HEK293 (cell line): ENCODE measurements at regions of chr17 and their contacts with region 1.

Region 1: DNA sequence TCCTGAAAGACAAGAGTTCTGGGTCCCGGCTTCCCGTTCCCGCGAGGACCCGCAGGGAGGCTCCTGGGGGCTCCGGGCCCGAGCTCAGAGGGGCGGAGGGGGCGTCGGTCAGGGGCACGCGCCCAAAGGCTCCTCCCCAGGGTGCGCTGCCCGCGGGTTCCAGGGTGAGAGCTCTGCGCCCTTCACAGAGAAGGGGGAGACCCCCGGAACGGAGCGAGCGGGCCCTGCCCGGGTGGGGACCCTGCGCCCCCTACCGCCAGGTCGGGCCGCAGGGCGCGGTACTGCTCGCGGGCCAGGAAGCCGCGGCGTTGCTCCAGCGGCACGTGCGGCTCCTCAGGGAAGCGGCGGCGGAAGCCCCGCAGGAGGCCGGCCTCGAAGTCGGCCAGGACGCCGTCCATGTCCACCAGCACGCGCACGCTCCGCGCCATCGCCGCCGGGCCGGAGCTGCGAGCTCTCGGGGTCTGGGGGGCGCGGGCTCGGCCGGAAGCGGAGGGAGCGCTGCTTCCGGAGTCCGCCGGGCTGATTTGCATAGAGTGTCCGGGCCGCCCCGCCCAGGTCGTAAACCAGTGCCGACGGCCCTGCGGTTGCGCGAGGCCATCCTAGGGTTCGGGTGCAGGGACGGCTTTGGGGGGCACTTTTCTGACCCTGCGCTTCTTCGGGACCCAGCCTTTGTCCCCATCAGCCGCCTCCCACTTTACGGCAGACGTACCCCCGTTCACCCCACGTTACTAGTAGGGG is at the start of gene NT5C:
- H3K4me3 ChIP-seq: peak within 1 kb of the TSS; percentile 61
- H3K27ac ChIP-seq: peak within 1 kb of the TSS; percentile 94
- H3K4me1 ChIP-seq: peaks cover 3% of the 10 kb centered on the region; the same call in 1 of the 2 replicates
- CTCF ChIP-seq: peak; percentile 87

Region 2: GRCh38 chr17:74881073-74881472 is 250.4 kb before region 1 on chr17:
- CTCF ChIA-PET with region 1: no interaction called
- POLR2A ChIA-PET with region 1: no interaction called
- H3K4me3 ChIP-seq: no peak overlapping the region
- H3K27ac ChIP-seq: no peak overlapping the region
- H3K4me1 ChIP-seq: no peaks in the 10 kb centered on the region; the same call in 1 of the 2 replicates
- CTCF ChIP-seq: no peak

Region 3: DNA sequence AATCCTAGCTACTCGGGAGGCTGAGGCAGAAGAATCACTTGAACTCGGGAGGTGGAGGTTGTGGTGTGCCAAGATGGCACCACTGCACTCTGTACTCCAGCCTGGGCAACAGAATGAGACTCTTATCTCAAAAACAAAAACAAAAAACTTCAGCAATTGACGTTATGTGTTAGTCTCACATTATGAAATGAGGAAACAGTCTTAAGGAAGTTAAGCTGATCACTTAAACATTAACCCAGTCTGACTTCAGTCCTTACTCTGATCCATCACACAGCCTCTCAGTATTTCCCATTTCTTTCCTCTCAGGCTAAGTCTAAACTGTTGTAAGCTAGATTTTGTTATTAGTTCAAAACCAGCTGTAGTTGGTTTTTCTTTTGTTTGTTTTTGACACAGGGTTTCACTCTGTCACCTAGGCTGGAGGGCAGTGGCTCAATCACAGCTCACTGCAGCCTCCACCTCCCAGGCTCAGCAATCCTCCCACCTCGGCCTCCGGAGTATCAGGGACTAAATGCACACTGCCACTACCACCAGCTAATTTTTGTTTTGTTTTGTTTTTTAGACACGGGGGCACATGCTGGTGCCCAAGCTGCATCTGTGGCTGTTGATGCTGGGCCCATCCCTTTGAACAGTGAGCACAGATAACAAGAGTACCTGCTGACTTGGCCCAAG is 16.6 kb after region 1 on chr17:
- CTCF ChIA-PET with region 1: interaction called, 16 read pairs
- POLR2A ChIA-PET with region 1: interaction called, 6 read pairs
- H3K4me3 ChIP-seq: no peak overlapping the region
- H3K27ac ChIP-seq: no peak overlapping the region
- H3K4me1 ChIP-seq: peaks cover 4% of the 10 kb centered on the region; the same call in 1 of the 2 replicates
- CTCF ChIP-seq: no peak

Region 4: DNA sequence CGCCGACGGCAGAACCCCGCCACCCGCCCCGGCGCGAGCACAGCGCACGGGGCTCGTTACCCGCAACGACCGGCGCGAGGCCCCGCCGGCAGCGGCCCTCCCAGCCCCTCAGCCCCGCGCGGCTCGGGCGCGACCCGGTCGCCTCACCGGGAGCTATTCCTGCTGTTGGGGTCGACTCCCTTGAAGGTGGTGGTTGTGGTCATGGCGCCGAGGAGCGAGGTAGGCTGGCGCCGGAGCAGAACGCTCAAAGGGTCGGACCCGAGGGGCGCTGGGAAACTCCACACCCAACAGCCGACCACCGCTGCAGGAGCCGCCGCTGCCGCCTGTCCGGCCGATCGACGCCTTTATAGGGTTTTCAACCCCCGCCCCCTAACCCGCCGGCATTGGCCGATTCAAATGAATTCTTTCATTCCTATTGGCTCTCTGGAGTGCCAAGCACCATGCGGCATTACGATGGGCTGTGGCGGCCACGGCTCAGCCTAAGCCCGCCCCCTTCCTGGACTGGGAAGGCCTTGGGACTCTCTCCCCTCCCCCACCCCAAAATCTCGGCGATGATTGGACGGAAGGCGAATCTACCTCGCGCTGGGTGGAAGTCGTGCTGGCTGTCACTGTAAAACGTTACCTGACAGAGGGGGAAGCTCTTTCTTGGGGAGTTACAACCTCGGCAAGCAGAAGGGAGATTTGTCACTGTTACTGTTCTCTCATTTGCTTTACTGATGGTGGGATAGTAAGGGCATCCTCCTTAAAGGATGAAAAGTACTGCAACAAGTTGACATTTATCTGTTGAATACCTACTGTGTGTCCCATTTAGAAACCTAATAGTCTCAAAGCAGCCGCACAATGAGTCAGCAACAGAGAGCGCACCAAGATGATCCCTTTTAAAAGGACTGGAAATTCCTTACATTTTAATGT is 23.0 kb after region 1 on chr17 and contains the start of gene JPT1:
- CTCF ChIA-PET with region 1: interaction called, 10 read pairs
- POLR2A ChIA-PET with region 1: interaction called, 20 read pairs
- H3K4me3 ChIP-seq: peak within 1 kb of the TSS; percentile 90
- H3K27ac ChIP-seq: peak within 1 kb of the TSS; percentile 92
- H3K4me1 ChIP-seq: peaks cover 9% of the 10 kb centered on the region; the same call in 1 of the 2 replicates
- CTCF ChIP-seq: peak; percentile 11; the same call in 1 of the 2 replicates

Region 5: GRCh38 chr17:75199886-75200618 is 68.6 kb after region 1 on chr17:
- CTCF ChIA-PET with region 1: interaction called, 11 read pairs
- POLR2A ChIA-PET with region 1: interaction called, 12 read pairs
- H3K4me3 ChIP-seq: no peak overlapping the region
- H3K27ac ChIP-seq: no peak overlapping the region
- H3K4me1 ChIP-seq: no peaks in the 10 kb centered on the region
- CTCF ChIP-seq: no peak

Region 6: DNA sequence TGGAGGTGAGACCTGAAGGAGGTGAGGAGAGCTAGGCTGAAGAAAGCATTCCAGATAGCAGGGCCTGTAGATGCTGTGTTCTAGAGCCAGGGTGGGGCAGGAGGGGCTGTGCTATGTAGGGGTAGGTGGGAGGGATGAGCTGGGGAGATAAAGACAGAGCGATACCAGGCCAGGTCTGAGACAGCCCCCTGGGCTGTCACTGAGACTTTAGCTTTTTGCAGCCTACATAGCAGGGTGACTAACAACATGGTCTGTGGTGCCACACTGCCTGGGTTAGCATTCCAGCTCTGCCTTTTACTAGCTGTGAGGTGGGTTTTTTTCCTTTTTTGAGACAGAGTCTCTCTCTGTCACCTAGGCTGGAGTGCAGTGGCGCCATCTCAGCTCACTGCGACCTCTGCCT is 88.4 kb after region 1 on chr17:
- CTCF ChIA-PET with region 1: no interaction called
- POLR2A ChIA-PET with region 1: no interaction called
- H3K4me3 ChIP-seq: no peak overlapping the region
- H3K27ac ChIP-seq: no peak overlapping the region
- H3K4me1 ChIP-seq: no peaks in the 10 kb centered on the region
- CTCF ChIP-seq: no peak

Region 7: GRCh38 chr17:75309025-75309772 is 177.8 kb after region 1 on chr17:
- CTCF ChIA-PET with region 1: no interaction called
- POLR2A ChIA-PET with region 1: no interaction called
- H3K4me3 ChIP-seq: no peak overlapping the region
- H3K27ac ChIP-seq: peak overlapping the region; percentile 46; the same call in 1 of the 2 replicates
- H3K4me1 ChIP-seq: no peaks in the 10 kb centered on the region
- CTCF ChIP-seq: no peak